ENCODE measurements at regions of chr5 and their contacts with region 1.

Region 1: GRCh38 chr5:81971712-81972495 is at the start of gene ATG10:
- DNase-seq: peak; percentile 75 to 95 (median 86)
- ATAC-seq: peak; percentile 85
- H3K4me3 ChIP-seq: peak within 1 kb of the TSS; percentile 85 to 99
- H3K4me3 Mint-ChIP-seq: peak within 1 kb of the TSS; percentile 100
- H3K27ac ChIP-seq: peak within 1 kb of the TSS; percentile 96 to 97
- H3K27ac Mint-ChIP-seq: peak within 1 kb of the TSS; percentile 100
- H3K4me1 ChIP-seq: peaks cover 12% of the 10 kb centered on the region
- H3K4me1 Mint-ChIP-seq: peaks cover 31% of the 10 kb centered on the region
- H3K27me3 ChIP-seq: no peaks in the 10 kb centered on the region
- H3K27me3 Mint-ChIP-seq: no peaks in the 10 kb centered on the region
- CTCF ChIP-seq: no peak
- total RNA-seq, gene ATG10: 4.7 to 5.7 TPM

Region 2: DNA sequence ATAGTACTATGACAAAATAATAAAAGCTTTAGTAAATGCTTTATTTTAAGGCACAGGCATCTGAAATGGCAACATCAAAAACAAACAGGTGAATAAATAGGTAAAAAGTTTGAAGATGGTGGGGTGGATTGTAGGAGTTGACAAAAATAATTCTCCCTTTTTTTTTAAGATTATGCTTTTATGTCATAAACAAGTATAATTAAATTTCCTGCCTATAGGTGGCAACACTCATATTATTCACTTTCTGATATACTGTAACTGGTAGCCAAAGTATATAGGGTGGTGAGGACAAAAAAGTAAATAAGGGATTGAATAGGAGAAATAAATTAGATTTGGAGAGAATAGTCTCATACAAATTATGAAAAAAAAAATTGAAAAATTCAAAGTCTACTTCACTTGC is 457.9 kb before region 1 on chr5:
- CTCF ChIA-PET with region 1: no interaction called
- POLR2A ChIA-PET with region 1: interaction called, 7 read pairs
- intact Hi-C with region 1: loop called in 1 of 2 experiments (anchors 10 kb)
- DNase-seq: peak in 1 of 9 experiments; percentile 35
- ATAC-seq: peak; percentile 42
- H3K4me3 ChIP-seq: no peak overlapping the region
- H3K4me3 Mint-ChIP-seq: no peak overlapping the region
- H3K27ac ChIP-seq: no peak overlapping the region
- H3K27ac Mint-ChIP-seq: no peak overlapping the region
- H3K4me1 ChIP-seq: no peaks in the 10 kb centered on the region
- H3K4me1 Mint-ChIP-seq: no peaks in the 10 kb centered on the region
- H3K27me3 ChIP-seq: no peaks in the 10 kb centered on the region
- H3K27me3 Mint-ChIP-seq: no peaks in the 10 kb centered on the region
- CTCF ChIP-seq: peak; percentile 51

Region 3: GRCh38 chr5:81590498-81591384 is 381.2 kb before region 1 on chr5:
- CTCF ChIA-PET with region 1: no interaction called
- POLR2A ChIA-PET with region 1: no interaction called
- intact Hi-C with region 1: no loop called
- DNase-seq: no peak
- ATAC-seq: no peak
- H3K4me3 ChIP-seq: no peak overlapping the region
- H3K4me3 Mint-ChIP-seq: no peak overlapping the region
- H3K27ac ChIP-seq: no peak overlapping the region
- H3K27ac Mint-ChIP-seq: no peak overlapping the region
- H3K4me1 ChIP-seq: no peaks in the 10 kb centered on the region
- H3K4me1 Mint-ChIP-seq: peaks cover 12% of the 10 kb centered on the region
- H3K27me3 ChIP-seq: no peaks in the 10 kb centered on the region
- H3K27me3 Mint-ChIP-seq: no peaks in the 10 kb centered on the region
- CTCF ChIP-seq: no peak

Region 4: GRCh38 chr5:82074950-82075349 is 103.0 kb after region 1 on chr5:
- CTCF ChIA-PET with region 1: no interaction called
- POLR2A ChIA-PET with region 1: no interaction called
- intact Hi-C with region 1: loop called in 1 of 2 experiments (anchors 5 kb)
- DNase-seq: no peak
- ATAC-seq: no peak
- H3K4me3 ChIP-seq: no peak overlapping the region
- H3K4me3 Mint-ChIP-seq: no peak overlapping the region
- H3K27ac ChIP-seq: no peak overlapping the region
- H3K27ac Mint-ChIP-seq: no peak overlapping the region
- H3K4me1 ChIP-seq: no peaks in the 10 kb centered on the region
- H3K4me1 Mint-ChIP-seq: peaks cover under 1% of the 10 kb centered on the region
- H3K27me3 ChIP-seq: no peaks in the 10 kb centered on the region
- H3K27me3 Mint-ChIP-seq: no peaks in the 10 kb centered on the region
- CTCF ChIP-seq: no peak

Region 5: DNA sequence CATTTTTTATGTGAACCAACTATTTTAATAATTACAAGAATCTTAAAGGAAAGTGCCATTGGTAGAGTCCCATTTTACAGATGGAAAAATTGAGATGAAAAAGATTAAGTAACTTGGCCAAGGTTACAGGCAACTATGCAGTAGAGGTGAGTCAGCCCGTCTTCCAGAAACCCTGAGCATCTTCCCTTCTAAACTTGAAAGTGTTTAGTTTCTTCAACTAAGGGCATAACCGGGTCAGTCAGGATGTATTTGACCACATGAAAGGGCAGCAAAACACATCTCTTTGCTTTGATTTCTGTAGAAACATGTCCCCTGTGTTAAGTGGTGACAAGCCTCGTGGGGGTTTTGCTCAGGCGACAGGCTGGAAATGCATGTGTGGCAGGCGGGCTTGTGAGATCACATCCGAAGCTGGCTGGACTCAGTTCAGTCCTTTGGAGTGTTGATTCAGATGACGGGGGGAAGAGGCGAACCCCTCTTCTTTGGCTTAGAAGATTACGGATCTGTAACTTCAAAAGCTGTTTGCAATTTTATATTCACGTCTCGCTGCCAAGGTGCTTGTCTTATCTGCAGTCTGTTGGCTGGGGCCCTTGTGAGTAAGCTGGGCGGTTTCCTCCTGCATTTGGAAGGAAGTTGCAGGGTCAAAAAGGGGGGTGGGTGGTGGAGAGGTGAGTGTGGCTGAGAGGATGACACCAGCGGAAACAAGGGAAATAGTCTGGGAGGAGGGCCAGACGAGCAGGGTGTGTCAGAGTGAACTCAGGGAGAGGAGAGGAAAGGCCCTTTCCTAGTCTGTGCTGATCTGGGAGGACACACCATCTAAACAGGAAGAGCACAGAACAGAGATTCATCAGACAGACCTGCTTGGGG is 385.1 kb after region 1 on chr5:
- CTCF ChIA-PET with region 1: no interaction called
- POLR2A ChIA-PET with region 1: no interaction called
- intact Hi-C with region 1: loop called in 1 of 2 experiments (anchors 2 kb)
- DNase-seq: peak; percentile 44 to 90 (median 74)
- ATAC-seq: peak; percentile 83
- H3K4me3 ChIP-seq: peak overlapping the region in 1 of 2 experiments; percentile 9
- H3K4me3 Mint-ChIP-seq: peak overlapping the region; percentile 77
- H3K27ac ChIP-seq: peak overlapping the region; percentile 29 to 53
- H3K27ac Mint-ChIP-seq: peak overlapping the region; percentile 97
- H3K4me1 ChIP-seq: peaks cover 13% of the 10 kb centered on the region
- H3K4me1 Mint-ChIP-seq: peaks cover 24% of the 10 kb centered on the region
- H3K27me3 ChIP-seq: no peaks in the 10 kb centered on the region
- H3K27me3 Mint-ChIP-seq: no peaks in the 10 kb centered on the region
- CTCF ChIP-seq: no peak